AG04449 (cell line): ENCODE measurements at regions of chr5 and their contacts with region 1.

Region 1: DNA sequence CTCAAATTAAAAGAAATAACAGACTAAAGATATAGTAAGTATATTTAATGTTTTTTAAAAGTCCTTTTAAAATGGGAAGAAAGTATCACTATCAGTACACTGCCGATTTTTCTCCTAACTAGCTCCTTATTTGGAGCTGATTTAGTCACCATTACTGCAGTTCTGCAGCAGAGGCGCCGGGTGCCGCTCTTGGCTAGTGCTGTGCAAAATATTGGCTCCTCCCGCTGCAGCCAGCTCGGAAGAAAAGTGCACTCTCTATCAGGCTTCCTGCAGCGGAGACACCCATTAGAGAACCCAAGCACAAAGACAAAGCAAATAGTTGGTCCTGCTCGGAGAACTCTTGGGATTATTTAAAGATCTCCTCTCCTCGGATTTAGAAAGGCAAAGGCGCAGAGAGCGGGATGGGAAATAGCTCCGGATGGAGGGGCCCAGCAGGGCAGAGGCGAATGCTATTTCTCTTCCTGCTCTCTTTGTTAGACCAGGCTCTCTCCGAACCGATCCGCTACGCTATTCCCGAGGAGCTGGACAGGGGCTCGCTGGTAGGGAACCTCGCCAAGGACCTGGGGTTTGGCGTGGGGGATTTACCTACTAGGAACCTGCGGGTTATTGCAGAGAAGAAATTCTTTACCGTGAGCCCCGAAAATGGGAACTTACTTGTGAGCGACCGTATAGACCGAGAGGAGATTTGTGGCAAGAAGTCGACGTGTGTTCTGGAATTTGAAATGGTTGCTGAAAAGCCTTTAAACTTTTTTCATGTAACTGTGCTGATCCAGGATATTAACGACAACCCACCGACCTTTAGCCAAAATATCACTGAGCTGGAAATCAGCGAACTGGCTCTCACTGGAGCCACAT is at the start of gene PCDHGB3:
- DNase-seq: no peak
- H3K4me3 ChIP-seq: peak within 1 kb of the TSS; percentile 45
- CTCF ChIP-seq: peak; percentile 40

Region 2: DNA sequence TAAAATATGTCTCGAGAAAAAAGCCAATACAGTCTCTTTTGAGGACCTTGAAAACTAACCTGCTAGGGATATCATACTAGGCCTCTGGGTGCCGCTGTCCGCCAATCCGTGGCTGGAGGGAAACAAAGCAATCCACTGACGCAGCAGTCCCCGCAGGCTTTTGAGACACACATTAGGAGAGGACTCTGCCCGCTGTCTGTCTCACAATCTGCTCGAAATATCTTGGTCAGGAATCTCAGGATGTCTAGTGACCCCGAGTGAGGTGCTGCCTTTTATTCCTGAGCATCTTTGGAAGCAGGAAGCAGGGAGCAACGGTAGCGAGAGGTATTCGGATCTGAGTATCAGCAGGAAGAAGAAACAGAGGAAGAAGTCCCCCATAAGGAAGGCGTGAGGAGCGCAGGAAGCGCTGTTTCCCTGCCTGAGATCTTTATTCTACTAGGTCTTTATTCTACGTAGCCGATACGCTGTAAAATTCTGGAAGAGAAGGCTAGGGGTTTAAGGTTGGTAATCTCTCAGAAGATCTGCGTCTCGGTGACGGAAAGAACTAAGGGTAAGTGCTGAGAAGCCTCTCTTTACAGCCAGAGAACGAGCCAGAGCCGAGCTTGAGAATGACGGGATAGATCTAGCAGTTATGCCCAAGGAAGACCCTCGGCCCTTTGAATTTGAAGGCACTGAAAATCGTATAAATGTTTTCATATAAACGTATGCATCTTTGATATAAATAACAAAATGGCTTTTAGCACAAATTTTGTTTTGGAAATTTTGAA is 44.0 kb before region 1 on chr5:
- CTCF ChIA-PET with region 1: interaction called, 15 read pairs
- POLR2A ChIA-PET with region 1: no interaction called
- DNase-seq: no peak
- H3K4me3 ChIP-seq: peak overlapping the region; percentile 64
- CTCF ChIP-seq: peak; percentile 70

Region 3: GRCh38 chr5:141387233-141387949 is 17.2 kb after region 1 on chr5 and contains the start of gene PCDHGB4:
- CTCF ChIA-PET with region 1: interaction called, 16 read pairs
- POLR2A ChIA-PET with region 1: no interaction called
- DNase-seq: no peak
- H3K4me3 ChIP-seq: peak within 1 kb of the TSS; percentile 42
- CTCF ChIP-seq: peak; percentile 33

Region 4: DNA sequence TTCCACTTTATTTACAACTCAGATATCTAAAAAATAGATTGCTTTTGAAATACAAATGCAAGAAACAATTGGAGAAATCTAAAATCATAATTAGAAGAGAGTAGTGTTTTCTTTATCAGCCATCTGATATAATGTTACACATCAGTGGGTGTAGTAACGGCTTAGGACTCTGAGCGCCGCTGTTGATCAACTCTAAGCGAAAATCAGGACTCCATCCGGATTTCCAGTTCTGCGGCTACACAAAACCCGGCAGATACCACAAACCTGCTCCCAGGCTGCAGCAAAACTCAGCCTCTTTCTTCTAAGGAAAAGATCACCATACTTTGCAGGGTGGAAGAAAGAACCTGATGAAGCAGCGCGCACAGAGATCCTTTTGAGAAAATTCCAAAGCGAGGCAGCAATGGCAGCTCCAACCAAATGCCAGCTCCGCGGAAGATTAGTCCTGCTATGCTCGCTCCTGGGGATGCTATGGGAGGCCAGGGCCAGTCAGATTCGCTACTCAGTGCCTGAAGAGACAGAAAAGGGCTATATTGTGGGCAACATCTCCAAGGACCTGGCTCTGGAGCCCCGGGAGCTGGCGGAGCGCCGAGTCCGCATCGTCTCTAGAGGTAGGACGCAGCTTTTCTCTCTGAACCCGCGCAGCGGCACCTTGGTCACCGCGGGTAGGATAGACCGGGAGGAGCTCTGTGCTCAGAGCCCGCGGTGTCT is 32.5 kb after region 1 on chr5 and contains the start of gene PCDHGA9:
- CTCF ChIA-PET with region 1: interaction called, 16 read pairs
- POLR2A ChIA-PET with region 1: no interaction called
- DNase-seq: no peak
- H3K4me3 ChIP-seq: peak within 1 kb of the TSS; percentile 34
- CTCF ChIP-seq: no peak

Region 5: DNA sequence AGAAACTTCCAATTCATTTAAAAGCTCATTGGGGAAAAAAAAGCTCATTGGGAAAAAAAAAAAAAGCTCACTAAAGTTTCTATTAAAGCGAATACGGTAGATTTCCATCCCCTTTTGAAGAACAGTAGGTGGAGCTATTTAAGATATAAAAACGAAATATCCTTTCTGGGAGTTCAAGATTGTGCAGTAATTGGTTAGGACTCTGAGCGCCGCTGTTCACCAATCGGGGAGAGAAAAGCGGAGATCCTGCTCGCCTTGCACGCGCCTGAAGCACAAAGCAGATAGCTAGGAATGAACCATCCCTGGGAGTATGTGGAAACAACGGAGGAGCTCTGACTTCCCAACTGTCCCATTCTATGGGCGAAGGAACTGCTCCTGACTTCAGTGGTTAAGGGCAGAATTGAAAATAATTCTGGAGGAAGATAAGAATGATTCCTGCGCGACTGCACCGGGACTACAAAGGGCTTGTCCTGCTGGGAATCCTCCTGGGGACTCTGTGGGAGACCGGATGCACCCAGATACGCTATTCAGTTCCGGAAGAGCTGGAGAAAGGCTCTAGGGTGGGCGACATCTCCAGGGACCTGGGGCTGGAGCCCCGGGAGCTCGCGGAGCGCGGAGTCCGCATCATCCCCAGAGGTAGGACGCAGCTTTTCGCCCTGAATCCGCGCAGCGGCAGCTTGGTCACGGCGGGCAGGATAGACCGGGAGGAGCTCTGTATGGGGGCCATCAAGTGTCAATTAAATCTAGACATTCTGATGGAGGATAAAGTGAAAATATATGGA is 60.3 kb after region 1 on chr5 and contains the start of gene PCDHGA12:
- CTCF ChIA-PET with region 1: interaction called, 14 read pairs
- POLR2A ChIA-PET with region 1: no interaction called
- DNase-seq: peak; percentile 52
- H3K4me3 ChIP-seq: peak within 1 kb of the TSS; percentile 49
- CTCF ChIP-seq: peak; percentile 38